B cell (primary cell): ENCODE measurements at regions of chr1 and their contacts with region 1.

Region 1: DNA sequence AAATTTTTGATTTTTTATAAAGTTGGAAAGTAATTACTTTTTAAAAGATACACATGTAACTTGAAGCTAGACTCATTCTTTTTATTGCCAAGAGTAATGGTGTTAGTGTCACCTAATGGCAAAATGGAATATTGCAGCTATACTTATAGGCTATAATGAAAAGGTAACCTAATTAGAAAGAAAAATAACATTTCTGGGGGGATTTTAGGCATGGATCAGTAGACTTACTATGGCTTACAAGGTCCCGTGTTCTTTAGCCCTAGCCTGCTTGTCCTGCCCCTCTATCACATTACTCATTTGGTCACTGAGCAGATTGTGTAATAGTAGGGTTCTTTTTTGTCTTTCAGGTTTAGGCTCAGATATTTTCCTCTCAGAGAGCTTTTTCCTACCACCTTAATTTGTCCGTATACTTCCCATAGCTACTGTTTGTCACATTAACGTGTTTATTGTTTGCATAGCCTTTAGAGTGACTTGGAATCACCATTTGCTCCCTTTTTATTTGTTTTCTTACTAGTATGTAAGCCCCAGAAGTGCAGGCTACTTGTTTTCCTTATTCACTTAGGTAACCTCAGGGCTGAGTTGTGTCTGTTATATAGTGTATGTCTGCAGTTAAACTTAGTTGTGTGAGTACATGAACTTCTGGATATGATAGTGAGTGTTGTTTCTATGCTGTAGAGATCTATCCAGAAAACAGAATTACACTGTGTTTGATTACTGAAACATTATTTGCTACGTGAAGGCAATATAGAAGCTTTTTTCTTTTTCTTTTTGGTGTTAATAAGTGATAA is 58.7 kb downstream of the RABGAP1L start:
- DNase-seq: peak; percentile 71
- ATAC-seq: peak; percentile 71
- H3K4me3 ChIP-seq: no peak overlapping the region
- H3K4me3 Mint-ChIP-seq: no peak overlapping the region
- H3K27ac ChIP-seq: peak overlapping the region; percentile 48 to 67
- H3K27ac Mint-ChIP-seq: no peak overlapping the region
- H3K4me1 ChIP-seq: peaks cover 37 to 39% of the 10 kb centered on the region in 2 donors
- H3K4me1 Mint-ChIP-seq: peaks cover 40% of the 10 kb centered on the region
- H3K27me3 ChIP-seq: no peaks in the 10 kb centered on the region
- H3K27me3 Mint-ChIP-seq: no peaks in the 10 kb centered on the region
- CTCF ChIP-seq: peak; percentile 93

Region 2: GRCh38 chr1:172738389-172738788 is 1479.6 kb before region 1 on chr1:
- CTCF ChIA-PET with region 1: interaction called, 4 read pairs
- POLR2A ChIA-PET with region 1: no interaction called
- intact Hi-C with region 1: loop called (anchors 5 kb)
- DNase-seq: no peak
- ATAC-seq: no peak
- H3K4me3 ChIP-seq: no peak overlapping the region
- H3K4me3 Mint-ChIP-seq: no peak overlapping the region
- H3K27ac ChIP-seq: no peak overlapping the region
- H3K27ac Mint-ChIP-seq: no peak overlapping the region
- H3K4me1 ChIP-seq: peaks cover 0 to 6% of the 10 kb centered on the region in 2 donors
- H3K4me1 Mint-ChIP-seq: peaks cover 5% of the 10 kb centered on the region
- H3K27me3 ChIP-seq: peaks cover 0 to 8% (median 0%) of the 10 kb centered on the region in 4 experiments
- H3K27me3 Mint-ChIP-seq: peaks cover 9% of the 10 kb centered on the region
- CTCF ChIP-seq: no peak

Region 3: DNA sequence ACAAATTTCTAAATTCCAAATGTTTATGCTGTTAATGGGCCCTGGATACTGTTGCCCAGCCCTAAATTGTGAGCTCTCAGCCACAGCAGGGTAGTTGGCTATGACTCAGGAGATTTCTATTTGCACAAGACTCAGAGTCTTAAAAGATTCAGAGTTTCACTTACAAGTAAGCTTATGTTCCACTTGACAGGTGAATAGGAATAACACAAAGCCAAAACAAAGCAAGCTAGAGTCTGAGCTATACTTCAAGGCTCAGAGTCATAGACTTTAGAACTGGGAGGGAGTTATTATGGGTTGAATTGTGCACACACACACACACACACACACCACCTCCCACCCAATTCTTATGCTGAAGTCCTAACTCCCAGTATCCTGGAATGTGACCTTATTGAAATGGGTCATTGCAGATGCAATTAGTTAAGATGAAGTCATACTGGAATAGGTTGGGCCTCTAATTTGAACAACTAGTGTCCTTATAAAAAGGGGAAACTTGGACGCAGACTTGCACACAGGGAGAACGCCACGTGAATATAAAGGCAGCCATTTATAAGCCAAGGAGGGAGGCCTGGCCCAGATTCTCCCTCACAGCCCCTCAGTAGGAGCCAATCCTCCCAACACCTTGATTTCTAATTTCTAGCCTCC is 710.7 kb before region 1 on chr1:
- CTCF ChIA-PET with region 1: no interaction called
- POLR2A ChIA-PET with region 1: no interaction called
- intact Hi-C with region 1: no loop called
- DNase-seq: no peak
- ATAC-seq: no peak
- H3K4me3 ChIP-seq: no peak overlapping the region
- H3K4me3 Mint-ChIP-seq: no peak overlapping the region
- H3K27ac ChIP-seq: no peak overlapping the region
- H3K27ac Mint-ChIP-seq: no peak overlapping the region
- H3K4me1 ChIP-seq: no peaks in the 10 kb centered on the region
- H3K4me1 Mint-ChIP-seq: no peaks in the 10 kb centered on the region
- H3K27me3 ChIP-seq: no peaks in the 10 kb centered on the region
- H3K27me3 Mint-ChIP-seq: no peaks in the 10 kb centered on the region
- CTCF ChIP-seq: no peak

Region 4: GRCh38 chr1:173867753-173868265 is 350.2 kb before region 1 on chr1 and contains the start of gene GAS5:
- CTCF ChIA-PET with region 1: interaction called, 4 read pairs
- POLR2A ChIA-PET with region 1: no interaction called
- intact Hi-C with region 1: loop called (anchors 5 kb)
- DNase-seq: peak; percentile 99
- ATAC-seq: peak; percentile 77
- H3K4me3 ChIP-seq: peak within 1 kb of the TSS; percentile 70 to 98 (median 89)
- H3K4me3 Mint-ChIP-seq: peak within 1 kb of the TSS; percentile 94
- H3K27ac ChIP-seq: peak within 1 kb of the TSS; percentile 90 to 93
- H3K27ac Mint-ChIP-seq: peak within 1 kb of the TSS; percentile 98
- H3K4me1 ChIP-seq: peaks cover 42 to 50% of the 10 kb centered on the region in 2 donors
- H3K4me1 Mint-ChIP-seq: peaks cover 70% of the 10 kb centered on the region
- H3K27me3 ChIP-seq: no peaks in the 10 kb centered on the region
- H3K27me3 Mint-ChIP-seq: no peaks in the 10 kb centered on the region
- CTCF ChIP-seq: no peak
- total RNA-seq, gene GAS5: 590 and 622 TPM in 2 replicates

Region 5: DNA sequence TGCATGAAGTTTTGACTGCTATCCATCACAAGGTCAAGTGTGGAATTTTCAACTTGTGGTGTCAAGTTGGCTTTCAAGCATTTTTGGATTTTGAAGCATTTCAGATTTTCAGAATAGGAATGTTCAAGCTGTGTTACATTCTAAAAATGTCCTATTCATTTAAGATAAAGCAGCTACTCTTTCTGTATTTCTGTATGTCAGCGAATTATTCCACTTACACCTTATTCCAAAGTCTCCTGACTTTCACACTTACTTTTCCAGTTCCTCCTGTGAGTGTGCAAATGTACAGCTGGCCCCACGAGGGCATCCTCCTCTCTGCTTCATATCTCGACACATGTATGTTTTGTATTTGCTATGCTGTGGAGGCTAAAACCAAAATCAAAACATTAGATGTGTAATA is 247.7 kb before region 1 on chr1:
- CTCF ChIA-PET with region 1: interaction called, 9 read pairs
- POLR2A ChIA-PET with region 1: no interaction called
- intact Hi-C with region 1: loop called (anchors 5 kb)
- DNase-seq: no peak
- ATAC-seq: no peak
- H3K4me3 ChIP-seq: no peak overlapping the region
- H3K4me3 Mint-ChIP-seq: no peak overlapping the region
- H3K27ac ChIP-seq: peak overlapping the region in 1 of 2 donors; percentile 5
- H3K27ac Mint-ChIP-seq: no peak overlapping the region
- H3K4me1 ChIP-seq: no peaks in the 10 kb centered on the region
- H3K4me1 Mint-ChIP-seq: no peaks in the 10 kb centered on the region
- H3K27me3 ChIP-seq: no peaks in the 10 kb centered on the region
- H3K27me3 Mint-ChIP-seq: no peaks in the 10 kb centered on the region
- CTCF ChIP-seq: no peak

Region 6: GRCh38 chr1:174005032-174005431 is 212.9 kb before region 1 on chr1:
- CTCF ChIA-PET with region 1: interaction called, 11 read pairs
- POLR2A ChIA-PET with region 1: no interaction called
- intact Hi-C with region 1: no loop called
- DNase-seq: peak; percentile 26
- ATAC-seq: peak; percentile 61
- H3K4me3 ChIP-seq: no peak overlapping the region
- H3K4me3 Mint-ChIP-seq: no peak overlapping the region
- H3K27ac ChIP-seq: no peak overlapping the region
- H3K27ac Mint-ChIP-seq: no peak overlapping the region
- H3K4me1 ChIP-seq: peaks cover 23 to 29% of the 10 kb centered on the region in 2 donors
- H3K4me1 Mint-ChIP-seq: peaks cover 62% of the 10 kb centered on the region
- H3K27me3 ChIP-seq: no peaks in the 10 kb centered on the region
- H3K27me3 Mint-ChIP-seq: no peaks in the 10 kb centered on the region
- CTCF ChIP-seq: no peak

Region 7: GRCh38 chr1:174022080-174022975 is 195.7 kb before region 1 on chr1 and contains the start of gene RC3H1:
- CTCF ChIA-PET with region 1: no interaction called
- POLR2A ChIA-PET with region 1: no interaction called
- intact Hi-C with region 1: loop called (anchors 2 kb)
- DNase-seq: peak; percentile 93
- ATAC-seq: peak; percentile 95
- H3K4me3 ChIP-seq: peak within 1 kb of the TSS; percentile 73 to 94 (median 91)
- H3K4me3 Mint-ChIP-seq: peak within 1 kb of the TSS; percentile 95
- H3K27ac ChIP-seq: peak within 1 kb of the TSS; percentile 76 to 93
- H3K27ac Mint-ChIP-seq: peak within 1 kb of the TSS; percentile 96
- H3K4me1 ChIP-seq: peaks cover 30 to 36% of the 10 kb centered on the region in 2 donors
- H3K4me1 Mint-ChIP-seq: peaks cover 41% of the 10 kb centered on the region
- H3K27me3 ChIP-seq: no peaks in the 10 kb centered on the region
- H3K27me3 Mint-ChIP-seq: no peaks in the 10 kb centered on the region
- CTCF ChIP-seq: no peak
- total RNA-seq, gene RC3H1: 84.4 and 84.5 TPM in 2 replicates

Region 8: DNA sequence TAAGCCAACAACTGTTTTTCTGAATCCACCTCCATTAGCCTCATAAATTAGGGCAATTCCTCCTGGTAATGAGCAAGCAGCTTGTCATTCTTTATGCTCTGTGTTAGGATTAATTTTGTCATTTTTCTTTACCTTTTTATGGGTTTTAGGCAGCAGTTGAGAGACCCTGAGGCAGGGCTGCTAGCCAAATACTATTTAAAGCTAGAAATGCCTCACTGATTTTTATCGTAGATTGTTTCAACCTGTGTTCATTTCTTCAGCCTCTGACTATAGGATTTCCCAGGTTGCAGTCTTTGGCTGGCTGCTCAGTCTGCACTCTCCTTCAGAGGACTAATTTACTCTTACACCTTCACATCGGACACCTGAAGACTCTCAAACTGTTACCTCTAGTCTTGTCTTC is 120.6 kb before region 1 on chr1:
- CTCF ChIA-PET with region 1: interaction called, 19 read pairs
- POLR2A ChIA-PET with region 1: no interaction called
- intact Hi-C with region 1: loop called (anchors 1 kb)
- DNase-seq: no peak
- ATAC-seq: no peak
- H3K4me3 ChIP-seq: no peak overlapping the region
- H3K4me3 Mint-ChIP-seq: no peak overlapping the region
- H3K27ac ChIP-seq: no peak overlapping the region
- H3K27ac Mint-ChIP-seq: no peak overlapping the region
- H3K4me1 ChIP-seq: no peaks in the 10 kb centered on the region
- H3K4me1 Mint-ChIP-seq: peaks cover 7% of the 10 kb centered on the region
- H3K27me3 ChIP-seq: no peaks in the 10 kb centered on the region
- H3K27me3 Mint-ChIP-seq: no peaks in the 10 kb centered on the region
- CTCF ChIP-seq: no peak

Region 9: DNA sequence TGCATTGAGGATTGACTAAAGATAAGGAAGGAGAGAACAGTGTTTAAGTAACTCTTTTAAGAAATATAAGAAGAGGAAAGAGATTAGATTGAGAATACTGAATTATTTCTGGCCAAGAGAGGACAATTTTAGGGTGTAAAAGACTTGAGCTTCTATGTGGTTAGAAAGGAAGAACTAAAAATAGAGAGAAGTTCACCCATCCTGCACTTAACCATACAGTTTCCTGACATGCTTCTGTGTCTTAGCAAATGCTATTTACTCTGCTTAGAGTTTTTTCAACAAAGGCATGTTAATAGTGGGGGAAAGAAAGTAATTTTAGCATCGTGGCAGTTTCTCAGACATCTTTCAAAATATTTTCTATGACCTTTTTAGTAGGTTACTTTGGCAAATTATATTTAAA is 107.0 kb after region 1 on chr1:
- CTCF ChIA-PET with region 1: no interaction called
- POLR2A ChIA-PET with region 1: no interaction called
- intact Hi-C with region 1: no loop called
- DNase-seq: no peak
- ATAC-seq: no peak
- H3K4me3 ChIP-seq: peak overlapping the region in 1 of 5 experiments; percentile 16
- H3K4me3 Mint-ChIP-seq: peak overlapping the region; percentile 50
- H3K27ac ChIP-seq: peak overlapping the region in 1 of 2 donors; percentile 52
- H3K27ac Mint-ChIP-seq: no peak overlapping the region
- H3K4me1 ChIP-seq: peaks cover 16 to 23% of the 10 kb centered on the region in 2 donors
- H3K4me1 Mint-ChIP-seq: peaks cover 28% of the 10 kb centered on the region
- H3K27me3 ChIP-seq: no peaks in the 10 kb centered on the region
- H3K27me3 Mint-ChIP-seq: no peaks in the 10 kb centered on the region
- CTCF ChIP-seq: no peak